A673 (cell line): ENCODE measurements at regions of chr12 and their contacts with region 1.

Region 1: GRCh38 chr12:57111031-57111734 is at the start of gene STAT6:
- DNase-seq: peak; percentile 85
- H3K4me3 ChIP-seq: peak within 1 kb of the TSS; percentile 51
- H3K27ac ChIP-seq: peak within 1 kb of the TSS; percentile 90
- H3K4me1 ChIP-seq: peaks cover 22% of the 10 kb centered on the region
- H3K27me3 ChIP-seq: no peaks in the 10 kb centered on the region
- CTCF ChIP-seq: no peak; the same call in 1 of the 2 replicates
- total RNA-seq, gene STAT6: 96.3 and 111 TPM in 2 replicates

Region 2: GRCh38 chr12:56510786-56511185 is 600.4 kb before region 1 on chr12:
- CTCF ChIA-PET with region 1: no interaction called
- POLR2A ChIA-PET with region 1: no interaction called
- intact Hi-C with region 1: loop called (anchors 5 kb)
- DNase-seq: no peak
- H3K4me3 ChIP-seq: no peak overlapping the region
- H3K27ac ChIP-seq: no peak overlapping the region
- H3K4me1 ChIP-seq: no peaks in the 10 kb centered on the region
- H3K27me3 ChIP-seq: no peaks in the 10 kb centered on the region
- CTCF ChIP-seq: no peak

Region 3: DNA sequence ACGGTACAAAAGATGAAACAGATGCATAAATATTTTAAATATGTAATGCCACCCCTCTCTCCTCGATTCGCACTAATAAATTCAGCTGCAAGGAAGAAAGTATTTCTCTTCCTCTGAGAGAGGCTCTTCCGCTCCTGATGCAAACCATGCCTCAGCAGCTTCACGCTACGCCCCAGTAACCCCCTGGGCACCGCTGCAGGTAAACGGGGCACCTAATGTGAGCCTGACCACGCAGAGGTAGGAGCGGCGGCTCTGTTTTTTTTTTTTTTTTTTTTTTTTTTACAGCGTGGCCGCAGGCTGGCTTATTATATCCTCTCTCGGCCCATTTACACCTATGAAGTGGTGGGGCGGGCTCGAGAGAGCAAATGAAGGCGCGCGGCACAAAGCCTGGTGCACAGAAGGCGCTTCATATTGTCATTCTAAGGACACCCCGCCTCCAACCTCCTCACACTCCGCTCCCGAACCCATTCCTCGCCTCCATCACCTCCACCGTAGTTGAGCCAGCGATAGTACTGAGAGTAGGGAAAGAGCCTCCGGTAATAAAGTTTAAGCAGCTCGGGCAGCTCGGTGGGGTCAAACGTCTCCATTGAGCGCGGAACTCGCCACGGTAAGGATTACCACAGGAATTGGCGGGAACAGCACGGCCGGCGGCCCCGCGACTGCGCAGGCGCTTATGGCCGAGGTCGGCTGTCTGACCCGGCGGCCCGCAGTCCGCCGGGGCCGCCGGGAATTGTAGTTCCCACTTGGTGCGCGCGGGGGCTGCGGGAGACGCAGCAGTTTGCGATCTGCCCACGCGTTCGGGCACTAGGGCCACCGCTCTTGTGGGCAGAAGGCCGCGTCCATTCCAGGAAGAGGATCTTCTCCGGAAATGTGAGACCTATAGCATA is 359.2 kb before region 1 on chr12 and contains the start of gene PRIM1:
- CTCF ChIA-PET with region 1: no interaction called
- POLR2A ChIA-PET with region 1: no interaction called
- intact Hi-C with region 1: loop called (anchors 2 kb)
- DNase-seq: peak; percentile 92
- H3K4me3 ChIP-seq: peak within 1 kb of the TSS; percentile 86
- H3K27ac ChIP-seq: peak within 1 kb of the TSS; percentile 90
- H3K4me1 ChIP-seq: peaks cover 14% of the 10 kb centered on the region
- H3K27me3 ChIP-seq: no peaks in the 10 kb centered on the region
- CTCF ChIP-seq: no peak
- total RNA-seq, gene PRIM1: 51.9 and 66.2 TPM in 2 replicates

Region 4: DNA sequence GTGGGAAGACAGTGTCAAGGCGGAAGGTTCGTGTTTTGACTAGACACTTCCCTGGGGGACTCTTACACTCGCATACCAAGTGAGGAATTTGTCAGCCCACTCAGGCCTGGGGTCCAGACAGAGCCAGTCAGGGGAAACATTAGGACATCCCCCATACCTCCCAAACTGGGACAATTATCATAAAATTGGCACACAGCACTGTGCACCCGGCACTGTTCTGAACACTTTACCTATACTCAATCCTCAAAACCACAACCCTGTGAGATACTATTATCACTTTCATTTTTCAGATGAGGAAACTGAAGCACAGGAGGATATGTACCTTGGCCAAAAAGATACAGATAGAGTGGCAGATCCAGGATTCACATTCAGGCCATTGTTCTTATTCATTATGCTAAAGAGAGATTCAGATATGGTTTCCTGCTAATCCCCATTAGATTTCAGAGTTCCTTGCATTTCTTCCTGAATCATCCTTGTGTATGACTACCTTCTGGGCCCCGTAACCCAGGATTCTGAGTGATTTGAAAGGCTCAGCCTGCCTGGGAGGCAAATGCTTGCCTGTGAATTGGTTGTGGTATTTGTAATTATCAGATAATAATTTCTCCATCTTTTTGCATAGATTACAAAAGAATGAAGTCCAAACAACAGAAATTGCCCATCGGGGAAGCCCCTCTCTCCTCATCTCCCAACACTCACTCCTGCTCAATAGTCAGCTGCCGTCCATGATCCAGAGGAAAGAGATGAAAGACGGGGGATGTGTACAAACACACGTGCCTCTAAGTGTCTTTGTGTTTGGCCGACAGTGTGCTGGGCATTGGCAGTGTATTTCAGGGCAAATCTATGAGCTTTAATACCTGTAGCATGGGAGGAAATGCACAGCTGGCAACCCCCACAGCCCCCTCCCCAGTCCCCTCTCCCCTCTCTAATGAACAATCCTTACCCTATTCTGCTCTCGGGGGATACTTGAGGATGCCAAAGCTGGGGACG is 99.5 kb before region 1 on chr12:
- CTCF ChIA-PET with region 1: interaction called, 30 read pairs
- POLR2A ChIA-PET with region 1: no interaction called
- intact Hi-C with region 1: loop called (anchors 1 kb)
- DNase-seq: no peak
- H3K4me3 ChIP-seq: no peak overlapping the region
- H3K27ac ChIP-seq: no peak overlapping the region
- H3K4me1 ChIP-seq: peaks cover 4% of the 10 kb centered on the region
- H3K27me3 ChIP-seq: peaks cover 4% of the 10 kb centered on the region
- CTCF ChIP-seq: no peak

Region 5: DNA sequence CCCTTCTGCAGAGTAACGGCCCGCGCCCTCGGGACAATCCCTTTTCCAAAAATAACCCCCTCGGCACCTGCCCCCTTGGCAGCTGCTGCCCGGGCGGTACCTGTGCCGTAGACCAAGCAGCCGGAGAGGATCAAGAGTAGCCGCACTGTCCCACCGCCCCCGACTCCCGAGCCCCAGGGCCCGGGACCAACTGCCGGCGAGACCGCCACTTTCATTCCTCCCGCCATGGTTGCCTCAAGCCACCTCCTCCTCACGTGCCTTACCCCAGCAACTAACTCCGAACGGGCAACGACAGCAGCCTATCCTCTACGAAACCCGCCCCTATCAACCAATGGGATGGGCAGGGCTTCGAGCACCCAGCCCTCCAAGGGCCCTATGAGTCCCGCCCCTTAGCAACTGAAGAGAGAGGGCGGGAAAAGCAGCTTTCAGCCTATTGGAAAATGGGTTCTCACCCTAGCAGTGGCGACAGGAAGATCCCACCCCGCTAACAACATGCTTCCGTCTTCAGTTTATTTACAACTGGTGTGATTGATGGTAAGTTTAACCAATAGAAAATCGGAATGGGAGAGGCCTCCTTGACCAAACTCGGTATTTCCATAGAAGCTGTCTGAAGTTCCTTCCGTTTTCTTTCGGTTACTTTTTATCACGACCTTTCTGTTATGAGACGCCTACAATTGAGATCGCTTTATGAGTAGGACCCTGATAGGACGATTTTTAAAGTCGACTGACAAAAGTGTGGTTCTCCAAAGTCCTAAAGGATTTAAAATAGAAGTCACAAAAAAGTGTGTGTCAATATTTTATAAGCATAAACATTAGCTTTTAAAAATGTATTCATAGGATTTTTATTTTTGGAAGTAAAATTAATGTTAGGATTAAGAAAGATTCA is 32.4 kb before region 1 on chr12 and contains the start of gene NEMP1:
- CTCF ChIA-PET with region 1: interaction called, 10 read pairs
- POLR2A ChIA-PET with region 1: no interaction called
- intact Hi-C with region 1: no loop called
- DNase-seq: peak; percentile 100
- H3K4me3 ChIP-seq: peak within 1 kb of the TSS; percentile 84
- H3K27ac ChIP-seq: peak within 1 kb of the TSS; percentile 96
- H3K4me1 ChIP-seq: peaks cover 5% of the 10 kb centered on the region
- H3K27me3 ChIP-seq: no peaks in the 10 kb centered on the region
- CTCF ChIP-seq: no peak
- total RNA-seq, gene NEMP1: 57.8 and 68.6 TPM in 2 replicates

Region 6: GRCh38 chr12:57124259-57124877 is 13.2 kb after region 1 on chr12:
- CTCF ChIA-PET with region 1: interaction called, 17 read pairs
- POLR2A ChIA-PET with region 1: interaction called, 3 read pairs
- intact Hi-C with region 1: no loop called
- DNase-seq: peak; percentile 86
- H3K4me3 ChIP-seq: no peak overlapping the region
- H3K27ac ChIP-seq: no peak overlapping the region
- H3K4me1 ChIP-seq: peaks cover 4% of the 10 kb centered on the region
- H3K27me3 ChIP-seq: no peaks in the 10 kb centered on the region
- CTCF ChIP-seq: peak; percentile 93